Mammary epithelial cell (primary cell): ENCODE measurements at regions of chr5 and their contacts with region 1.

Region 1: GRCh38 chr5:19352120-19352519 is 635.9 kb downstream of the CDH18 start:
- DNase-seq: no peak
- H3K4me3 ChIP-seq: no peak overlapping the region
- H3K27ac ChIP-seq: no peak overlapping the region
- H3K4me1 ChIP-seq: no peaks in the 10 kb centered on the region
- H3K27me3 ChIP-seq: no peaks in the 10 kb centered on the region
- CTCF ChIP-seq: no peak

Region 2: DNA sequence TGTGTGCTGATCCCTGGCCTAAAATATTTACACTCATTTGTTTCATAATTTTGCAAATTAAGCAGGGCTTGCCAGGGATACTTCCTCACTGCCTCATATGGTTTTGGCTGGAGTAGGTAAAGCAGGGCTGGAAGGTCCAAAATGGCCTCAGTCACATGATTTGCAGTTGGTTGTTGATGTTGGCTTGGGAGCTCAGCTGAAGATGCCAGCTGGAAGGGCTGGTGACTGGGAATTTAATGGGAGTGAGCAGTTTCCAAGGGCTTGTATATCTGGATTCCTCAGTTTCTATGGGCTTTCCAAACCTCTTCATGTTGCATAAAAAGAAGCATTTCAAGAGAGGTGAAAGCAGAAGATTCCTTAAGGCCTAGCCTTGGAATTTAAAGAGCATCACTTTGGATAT is 93.4 kb before region 1 on chr5:
- CTCF ChIA-PET with region 1: no interaction called
- dilution Hi-C with region 1: no loop called
- in situ Hi-C with region 1: no loop called
- intact Hi-C with region 1: no loop called
- DNase-seq: no peak
- H3K4me3 ChIP-seq: no peak overlapping the region
- H3K27ac ChIP-seq: no peak overlapping the region
- H3K4me1 ChIP-seq: no peaks in the 10 kb centered on the region
- H3K27me3 ChIP-seq: no peaks in the 10 kb centered on the region
- CTCF ChIP-seq: no peak

Region 3: DNA sequence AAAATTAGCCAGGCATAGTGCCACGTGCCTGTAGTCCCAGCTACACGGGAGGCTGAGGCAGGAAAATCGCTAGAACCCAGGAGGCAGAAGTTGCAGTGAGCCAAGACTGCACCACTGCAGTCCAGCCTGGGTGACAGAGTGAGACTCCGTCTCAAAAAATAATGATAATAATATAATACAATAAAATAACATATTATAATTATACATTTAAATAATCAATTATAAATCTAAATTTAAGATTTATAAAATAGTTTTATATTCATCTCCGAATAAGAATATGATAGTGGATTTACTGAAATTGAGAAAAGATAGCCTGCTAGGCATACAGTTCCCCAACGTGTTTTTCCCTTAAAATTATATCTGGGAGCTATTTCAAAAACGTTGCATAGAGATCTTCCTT is 36.3 kb after region 1 on chr5:
- CTCF ChIA-PET with region 1: no interaction called
- dilution Hi-C with region 1: loop called (anchors 5 kb)
- in situ Hi-C with region 1: no loop called
- intact Hi-C with region 1: no loop called
- DNase-seq: no peak
- H3K4me3 ChIP-seq: no peak overlapping the region
- H3K27ac ChIP-seq: no peak overlapping the region
- H3K4me1 ChIP-seq: no peaks in the 10 kb centered on the region
- H3K27me3 ChIP-seq: no peaks in the 10 kb centered on the region
- CTCF ChIP-seq: no peak

Region 4: DNA sequence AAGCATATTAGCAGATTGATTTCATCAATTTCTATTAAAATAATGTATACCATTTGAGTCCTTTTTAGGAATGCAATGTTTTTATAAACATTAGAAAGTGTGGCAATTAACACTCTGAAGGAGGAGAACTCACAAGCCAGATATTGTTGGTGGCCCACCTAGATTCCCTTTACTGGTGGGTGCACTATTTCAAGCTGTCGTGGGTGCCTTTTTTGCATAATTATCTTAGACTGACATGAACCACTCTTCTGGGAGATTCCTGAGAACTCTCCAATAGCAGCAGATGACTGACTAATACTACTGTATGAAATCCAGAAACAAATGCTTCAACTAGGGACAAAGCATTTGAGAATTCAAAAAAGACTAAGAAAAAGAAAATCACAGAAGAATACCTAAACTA is 109.9 kb after region 1 on chr5:
- CTCF ChIA-PET with region 1: no interaction called
- dilution Hi-C with region 1: no loop called
- in situ Hi-C with region 1: no loop called
- intact Hi-C with region 1: no loop called
- DNase-seq: no peak
- H3K4me3 ChIP-seq: no peak overlapping the region
- H3K27ac ChIP-seq: no peak overlapping the region
- H3K4me1 ChIP-seq: no peaks in the 10 kb centered on the region
- H3K27me3 ChIP-seq: no peaks in the 10 kb centered on the region
- CTCF ChIP-seq: no peak